B cell (primary cell): ENCODE measurements at regions of chr20 and their contacts with region 1.

Region 1: GRCh38 chr20:35619196-35620095 is 3.8 kb downstream of the SPAG4 start:
- DNase-seq: peak; percentile 90
- ATAC-seq: peak; percentile 18
- H3K4me3 ChIP-seq: peak overlapping the region; percentile 28 to 72 (median 55)
- H3K4me3 Mint-ChIP-seq: peak overlapping the region; percentile 95
- H3K27ac ChIP-seq: no peak overlapping the region
- H3K27ac Mint-ChIP-seq: peak overlapping the region; percentile 78
- H3K4me1 ChIP-seq: peaks cover 23 to 39% of the 10 kb centered on the region in 2 donors
- H3K4me1 Mint-ChIP-seq: peaks cover 36% of the 10 kb centered on the region
- H3K27me3 ChIP-seq: peaks cover 0 to 5% (median 2%) of the 10 kb centered on the region in 4 experiments
- H3K27me3 Mint-ChIP-seq: no peaks in the 10 kb centered on the region
- CTCF ChIP-seq: peak; percentile 84

Region 2: GRCh38 chr20:35410613-35411012 is 208.8 kb before region 1 on chr20:
- CTCF ChIA-PET with region 1: no interaction called
- POLR2A ChIA-PET with region 1: no interaction called
- intact Hi-C with region 1: loop called (anchors 5 kb)
- DNase-seq: no peak
- ATAC-seq: no peak
- H3K4me3 ChIP-seq: no peak overlapping the region
- H3K4me3 Mint-ChIP-seq: peak overlapping the region; percentile 99
- H3K27ac ChIP-seq: no peak overlapping the region
- H3K27ac Mint-ChIP-seq: peak overlapping the region; percentile 99
- H3K4me1 ChIP-seq: peaks cover 9 to 15% of the 10 kb centered on the region in 2 donors
- H3K4me1 Mint-ChIP-seq: peaks cover 24% of the 10 kb centered on the region
- H3K27me3 ChIP-seq: no peaks in the 10 kb centered on the region
- H3K27me3 Mint-ChIP-seq: peaks cover 4% of the 10 kb centered on the region
- CTCF ChIP-seq: no peak

Region 3: GRCh38 chr20:35463455-35464300 is 155.8 kb before region 1 on chr20:
- CTCF ChIA-PET with region 1: interaction called, 19 read pairs
- POLR2A ChIA-PET with region 1: no interaction called
- intact Hi-C with region 1: loop called (anchors 2 kb)
- DNase-seq: peak; percentile 80
- ATAC-seq: peak; percentile 77
- H3K4me3 ChIP-seq: no peak overlapping the region
- H3K4me3 Mint-ChIP-seq: no peak overlapping the region
- H3K27ac ChIP-seq: no peak overlapping the region
- H3K27ac Mint-ChIP-seq: peak overlapping the region; percentile 32
- H3K4me1 ChIP-seq: peaks cover 9 to 17% of the 10 kb centered on the region in 2 donors
- H3K4me1 Mint-ChIP-seq: peaks cover 15% of the 10 kb centered on the region
- H3K27me3 ChIP-seq: no peaks in the 10 kb centered on the region
- H3K27me3 Mint-ChIP-seq: no peaks in the 10 kb centered on the region
- CTCF ChIP-seq: peak; percentile 89

Region 4: GRCh38 chr20:35541783-35542588 is 77.5 kb before region 1 on chr20 and contains the start of gene ERGIC3:
- CTCF ChIA-PET with region 1: no interaction called
- POLR2A ChIA-PET with region 1: interaction called, 4 read pairs
- intact Hi-C with region 1: loop called (anchors 1 kb)
- DNase-seq: peak; percentile 98
- ATAC-seq: peak; percentile 93
- H3K4me3 ChIP-seq: peak within 1 kb of the TSS; percentile 55 to 94 (median 87)
- H3K4me3 Mint-ChIP-seq: peak within 1 kb of the TSS; percentile 94
- H3K27ac ChIP-seq: peak within 1 kb of the TSS; percentile 63 to 82
- H3K27ac Mint-ChIP-seq: peak within 1 kb of the TSS; percentile 94
- H3K4me1 ChIP-seq: peaks cover 9 to 18% of the 10 kb centered on the region in 2 donors
- H3K4me1 Mint-ChIP-seq: peaks cover 26% of the 10 kb centered on the region
- H3K27me3 ChIP-seq: no peaks in the 10 kb centered on the region
- H3K27me3 Mint-ChIP-seq: no peaks in the 10 kb centered on the region
- CTCF ChIP-seq: no peak
- total RNA-seq, gene ERGIC3: 167 and 191 TPM in 2 replicates

Region 5: DNA sequence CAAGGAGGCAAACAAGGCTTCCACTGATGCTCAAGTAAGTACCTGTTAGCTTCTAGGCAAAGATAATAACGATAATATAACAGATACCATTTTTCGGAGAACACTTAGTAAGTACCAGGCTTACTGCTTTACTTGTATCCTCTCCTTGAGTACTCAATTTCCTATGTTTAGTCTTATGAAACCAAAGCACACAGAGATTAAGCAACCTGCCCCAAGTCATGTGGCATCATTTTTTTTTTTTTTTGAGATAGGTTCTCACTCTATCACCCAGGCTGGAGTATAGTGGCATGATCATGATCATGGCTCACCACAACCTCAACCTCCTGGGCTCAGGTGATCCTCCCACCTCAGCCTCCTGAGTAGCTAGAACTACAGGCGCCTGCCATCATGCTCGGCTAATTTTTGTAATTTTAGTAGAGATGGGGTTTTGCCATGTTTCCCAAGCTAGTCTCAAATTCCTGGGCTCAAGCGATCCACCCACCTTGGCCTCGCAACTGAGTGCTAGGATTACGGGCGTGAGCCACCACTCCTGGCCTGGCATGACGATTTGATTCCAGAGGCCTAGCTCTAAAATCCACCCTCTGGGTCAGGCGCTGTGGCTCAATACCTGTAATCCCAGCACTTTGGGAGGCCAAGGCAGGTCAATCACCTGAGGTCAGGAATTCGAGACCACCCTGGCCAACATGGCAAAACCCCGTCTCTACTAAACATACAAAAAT is 10.1 kb after region 1 on chr20:
- CTCF ChIA-PET with region 1: interaction called, 19 read pairs
- POLR2A ChIA-PET with region 1: no interaction called
- intact Hi-C with region 1: no loop called
- DNase-seq: no peak
- ATAC-seq: no peak
- H3K4me3 ChIP-seq: no peak overlapping the region
- H3K4me3 Mint-ChIP-seq: no peak overlapping the region
- H3K27ac ChIP-seq: no peak overlapping the region
- H3K27ac Mint-ChIP-seq: no peak overlapping the region
- H3K4me1 ChIP-seq: no peaks in the 10 kb centered on the region
- H3K4me1 Mint-ChIP-seq: peaks cover 2% of the 10 kb centered on the region
- H3K27me3 ChIP-seq: no peaks in the 10 kb centered on the region
- H3K27me3 Mint-ChIP-seq: no peaks in the 10 kb centered on the region
- CTCF ChIP-seq: no peak

Region 6: DNA sequence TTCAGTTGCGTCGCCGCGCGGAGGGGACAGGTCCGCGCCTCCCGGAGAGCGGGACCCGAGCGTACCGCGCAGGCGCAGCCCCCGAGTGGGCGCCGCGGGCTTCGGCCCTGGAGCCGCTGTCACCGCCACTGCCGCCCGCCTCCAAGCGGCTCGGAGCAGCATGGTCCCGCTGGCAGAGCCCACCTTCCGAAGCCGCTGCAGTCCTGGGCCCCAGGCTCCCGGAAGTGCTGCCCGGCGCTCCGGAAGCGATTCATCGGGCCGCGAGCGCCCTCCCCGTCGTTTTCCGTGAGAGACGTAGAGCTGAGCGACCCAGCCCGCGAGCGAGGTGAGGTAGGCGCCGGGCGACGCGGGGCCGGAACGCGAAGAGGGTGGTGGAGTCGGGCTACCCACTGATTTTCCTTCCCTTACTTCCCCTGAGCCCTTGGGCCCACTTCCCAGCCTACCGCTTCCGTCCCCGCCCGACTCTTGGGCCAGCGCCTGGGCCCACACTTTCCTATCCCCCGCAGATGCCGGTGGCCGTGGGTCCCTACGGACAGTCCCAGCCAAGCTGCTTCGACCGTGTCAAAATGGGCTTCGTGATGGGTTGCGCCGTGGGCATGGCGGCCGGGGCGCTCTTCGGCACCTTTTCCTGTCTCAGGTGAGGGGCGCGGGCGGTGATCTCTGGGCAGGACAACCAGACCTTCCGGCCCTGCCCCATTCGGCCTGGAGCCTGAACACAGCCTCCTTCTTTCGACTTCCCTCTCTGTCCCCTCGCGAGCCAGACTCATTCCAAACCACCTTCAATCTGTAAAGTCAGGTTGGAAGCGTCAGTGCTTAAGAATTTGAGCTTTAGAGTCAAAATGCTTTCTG is 79.9 kb after region 1 on chr20 and contains the starts of genes NFS1 and ROMO1:
- CTCF ChIA-PET with region 1: interaction called, 6 read pairs
- POLR2A ChIA-PET with region 1: interaction called, 4 read pairs
- intact Hi-C with region 1: loop called (anchors 1 kb)
- DNase-seq: peak; percentile 92
- ATAC-seq: peak; percentile 88
- H3K4me3 ChIP-seq: peak within 1 kb of the TSS; percentile 69 to 98 (median 91)
- H3K4me3 Mint-ChIP-seq: peak within 1 kb of the TSS; percentile 85
- H3K27ac ChIP-seq: peak within 1 kb of the TSS; percentile 84 to 96
- H3K27ac Mint-ChIP-seq: peak within 1 kb of the TSS; percentile 97
- H3K4me1 ChIP-seq: peaks cover 17 to 23% of the 10 kb centered on the region in 2 donors
- H3K4me1 Mint-ChIP-seq: peaks cover 33% of the 10 kb centered on the region
- H3K27me3 ChIP-seq: no peaks in the 10 kb centered on the region
- H3K27me3 Mint-ChIP-seq: no peaks in the 10 kb centered on the region
- CTCF ChIP-seq: peak; percentile 31
- total RNA-seq, gene NFS1: 29.0 and 29.4 TPM in 2 replicates
- total RNA-seq, gene ROMO1: 33.2 and 38.1 TPM in 2 replicates

Region 7: DNA sequence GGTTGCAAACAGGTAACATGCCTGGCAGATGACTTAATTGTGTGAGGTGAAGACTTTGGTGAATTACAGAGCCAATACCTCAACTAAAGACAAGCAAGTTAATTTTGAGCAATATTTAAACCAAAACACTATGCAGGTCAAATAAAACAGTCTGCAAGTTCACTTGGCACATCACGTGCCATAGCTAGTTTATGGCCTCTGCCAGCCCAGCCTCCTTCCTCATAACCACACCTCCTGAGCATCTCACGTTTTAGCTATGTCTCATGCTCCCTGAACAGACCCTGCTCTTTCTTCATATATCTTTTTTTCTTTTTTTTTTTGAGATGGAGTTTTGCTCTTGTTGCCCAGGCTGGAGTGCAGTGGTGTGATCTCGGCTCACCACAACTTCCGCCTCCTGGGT is 344.4 kb after region 1 on chr20:
- CTCF ChIA-PET with region 1: no interaction called
- POLR2A ChIA-PET with region 1: interaction called, 13 read pairs
- intact Hi-C with region 1: no loop called
- DNase-seq: no peak
- ATAC-seq: no peak
- H3K4me3 ChIP-seq: no peak overlapping the region
- H3K4me3 Mint-ChIP-seq: no peak overlapping the region
- H3K27ac ChIP-seq: no peak overlapping the region
- H3K27ac Mint-ChIP-seq: no peak overlapping the region
- H3K4me1 ChIP-seq: no peaks in the 10 kb centered on the region
- H3K4me1 Mint-ChIP-seq: no peaks in the 10 kb centered on the region
- H3K27me3 ChIP-seq: no peaks in the 10 kb centered on the region
- H3K27me3 Mint-ChIP-seq: peaks cover 3% of the 10 kb centered on the region
- CTCF ChIP-seq: no peak